ENCODE measurements at regions of chr3 and their contacts with region 1.

Region 1: GRCh38 chr3:170037463-170038433 is at the start of gene GPR160:
- DNase-seq: peak; percentile 76 to 87 (median 82)
- H3K4me3 ChIP-seq: peak within 1 kb of the TSS; percentile 69 to 97 (median 84)
- H3K4me3 Mint-ChIP-seq: peak within 1 kb of the TSS; percentile 93 to 94
- H3K27ac ChIP-seq: peak within 1 kb of the TSS; percentile 48 to 76
- H3K27ac Mint-ChIP-seq: peak within 1 kb of the TSS; percentile 78 to 89 (median 82)
- H3K4me1 ChIP-seq: peaks cover 21 to 32% of the 10 kb centered on the region in 2 donors
- H3K4me1 Mint-ChIP-seq: peaks cover 19% of the 10 kb centered on the region
- H3K27me3 ChIP-seq: no peaks in the 10 kb centered on the region
- H3K27me3 Mint-ChIP-seq: peaks cover 0 to 2% (median 0%) of the 10 kb centered on the region in 3 donors
- CTCF ChIP-seq: peak; percentile 91
- polyA plus RNA-seq, gene GPR160: 10.0 to 19.7 (median 11.5) TPM

Region 2: DNA sequence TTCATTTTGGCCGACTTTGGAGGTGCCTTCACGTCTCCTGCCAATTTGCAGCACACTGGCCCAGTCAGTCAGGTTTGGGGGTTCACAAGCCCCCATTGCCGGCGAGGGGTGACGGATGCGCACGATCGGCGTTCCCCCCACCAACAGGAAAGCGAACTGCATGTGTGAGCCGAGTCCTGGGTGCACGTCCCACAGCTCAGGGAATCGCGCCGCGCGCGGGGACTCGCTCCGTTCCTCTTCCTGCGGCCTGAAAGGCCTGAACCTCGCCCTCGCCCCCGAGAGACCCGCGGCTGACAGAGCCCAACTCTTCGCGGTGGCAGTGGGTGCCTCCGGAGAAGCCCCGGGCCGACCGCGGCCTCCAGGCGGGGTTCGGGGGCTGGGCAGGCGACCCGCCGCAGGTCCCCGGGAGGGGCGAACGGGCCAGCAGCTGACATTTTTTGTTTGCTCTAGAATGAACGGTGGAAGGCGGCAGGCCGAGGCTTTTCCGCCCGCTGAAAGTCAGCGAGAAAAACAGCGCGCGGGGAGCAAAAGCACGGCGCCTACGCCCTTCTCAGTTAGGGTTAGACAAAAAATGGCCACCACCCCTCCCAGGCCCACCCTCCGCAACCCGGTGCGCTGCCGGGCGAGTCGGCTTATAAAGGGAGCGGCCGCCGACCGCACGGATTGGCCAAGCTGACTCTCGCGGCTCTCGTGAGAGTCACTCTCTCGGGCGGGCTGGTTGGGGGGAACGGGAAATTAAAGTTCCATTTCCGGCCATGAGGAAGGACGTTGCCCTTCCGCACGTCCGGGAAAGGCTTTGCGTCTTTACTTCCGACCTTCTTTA is 273.1 kb before region 1 on chr3 and contains the start of gene TERC:
- intact Hi-C with region 1: loop called in 1 of 2 experiments (anchors 5 kb)
- DNase-seq: peak; percentile 80 to 89 (median 81)
- H3K4me3 ChIP-seq: peak within 1 kb of the TSS; percentile 70 to 95 (median 79)
- H3K4me3 Mint-ChIP-seq: peak within 1 kb of the TSS; percentile 98 to 99
- H3K27ac ChIP-seq: peak within 1 kb of the TSS; percentile 88 to 93
- H3K27ac Mint-ChIP-seq: peak within 1 kb of the TSS; percentile 91 to 99 (median 96)
- H3K4me1 ChIP-seq: peaks cover 12 to 14% of the 10 kb centered on the region in 2 donors
- H3K4me1 Mint-ChIP-seq: peaks cover 12% of the 10 kb centered on the region
- H3K27me3 ChIP-seq: no peaks in the 10 kb centered on the region
- H3K27me3 Mint-ChIP-seq: peaks cover 2 to 6% (median 3%) of the 10 kb centered on the region in 3 donors
- CTCF ChIP-seq: no peak
- polyA plus RNA-seq, gene TERC: 0.33 to 0.76 TPM in 2 of 3 donors, not detected in the other

Region 3: GRCh38 chr3:169931747-169932520 is 105.8 kb before region 1 on chr3:
- intact Hi-C with region 1: loop called in 1 of 2 experiments (anchors 10 kb)
- DNase-seq: no peak
- H3K4me3 ChIP-seq: no peak overlapping the region
- H3K4me3 Mint-ChIP-seq: no peak overlapping the region
- H3K27ac ChIP-seq: no peak overlapping the region
- H3K27ac Mint-ChIP-seq: no peak overlapping the region
- H3K4me1 ChIP-seq: peaks cover 0 to 3% of the 10 kb centered on the region in 2 donors
- H3K4me1 Mint-ChIP-seq: peaks cover 4% of the 10 kb centered on the region
- H3K27me3 ChIP-seq: no peaks in the 10 kb centered on the region
- H3K27me3 Mint-ChIP-seq: peaks cover 0 to 10% (median 2%) of the 10 kb centered on the region in 3 donors
- CTCF ChIP-seq: no peak

Region 4: GRCh38 chr3:169980055-169980454 is 57.7 kb before region 1 on chr3:
- intact Hi-C with region 1: loop called in 1 of 2 experiments (anchors 10 kb)
- DNase-seq: peak; percentile 51 to 81 (median 75)
- H3K4me3 ChIP-seq: no peak overlapping the region
- H3K4me3 Mint-ChIP-seq: no peak overlapping the region
- H3K27ac ChIP-seq: peak overlapping the region in 1 of 2 donors; percentile 75
- H3K27ac Mint-ChIP-seq: peak overlapping the region; percentile 78 to 92 (median 89)
- H3K4me1 ChIP-seq: peaks cover 10 to 15% of the 10 kb centered on the region in 2 donors
- H3K4me1 Mint-ChIP-seq: peaks cover 21% of the 10 kb centered on the region
- H3K27me3 ChIP-seq: no peaks in the 10 kb centered on the region
- H3K27me3 Mint-ChIP-seq: no peaks in the 10 kb centered on the region
- CTCF ChIP-seq: no peak

Measured in CD14-positive monocyte (primary cell).